AG04449 (cell line): ENCODE measurements at regions of chr17 and their contacts with region 1.

Region 1: DNA sequence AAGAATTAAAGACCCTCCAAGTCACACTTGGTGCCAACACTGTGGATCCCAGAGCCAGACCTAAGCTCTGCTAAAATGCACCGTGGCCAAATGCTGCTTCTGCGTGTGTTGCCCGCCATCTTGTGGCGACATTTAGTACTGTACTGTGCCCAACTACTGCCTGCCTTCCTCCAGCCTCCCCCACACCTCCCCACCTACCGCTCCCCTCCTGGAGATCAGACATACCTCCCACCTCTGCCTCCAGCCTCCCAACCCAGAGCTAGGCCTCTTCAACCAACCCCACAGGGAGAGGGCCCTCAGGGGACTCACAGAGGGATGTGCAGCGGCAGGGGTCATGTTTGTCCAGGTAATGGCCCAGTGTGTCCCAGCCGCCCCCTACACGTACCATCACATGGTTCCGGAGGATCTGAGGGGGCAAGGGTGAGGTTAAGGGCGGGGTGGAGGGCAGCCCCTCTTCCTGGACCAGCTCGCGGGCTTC is 5.5 kb downstream of the GAS2L2 start:
- DNase-seq: peak; percentile 26
- H3K4me3 ChIP-seq: no peak overlapping the region
- CTCF ChIP-seq: peak; percentile 87

Region 2: GRCh38 chr17:35529866-35530265 is 217.7 kb before region 1 on chr17:
- CTCF ChIA-PET with region 1: interaction called, 13 read pairs
- POLR2A ChIA-PET with region 1: no interaction called
- DNase-seq: no peak
- H3K4me3 ChIP-seq: no peak overlapping the region
- CTCF ChIP-seq: no peak

Region 3: DNA sequence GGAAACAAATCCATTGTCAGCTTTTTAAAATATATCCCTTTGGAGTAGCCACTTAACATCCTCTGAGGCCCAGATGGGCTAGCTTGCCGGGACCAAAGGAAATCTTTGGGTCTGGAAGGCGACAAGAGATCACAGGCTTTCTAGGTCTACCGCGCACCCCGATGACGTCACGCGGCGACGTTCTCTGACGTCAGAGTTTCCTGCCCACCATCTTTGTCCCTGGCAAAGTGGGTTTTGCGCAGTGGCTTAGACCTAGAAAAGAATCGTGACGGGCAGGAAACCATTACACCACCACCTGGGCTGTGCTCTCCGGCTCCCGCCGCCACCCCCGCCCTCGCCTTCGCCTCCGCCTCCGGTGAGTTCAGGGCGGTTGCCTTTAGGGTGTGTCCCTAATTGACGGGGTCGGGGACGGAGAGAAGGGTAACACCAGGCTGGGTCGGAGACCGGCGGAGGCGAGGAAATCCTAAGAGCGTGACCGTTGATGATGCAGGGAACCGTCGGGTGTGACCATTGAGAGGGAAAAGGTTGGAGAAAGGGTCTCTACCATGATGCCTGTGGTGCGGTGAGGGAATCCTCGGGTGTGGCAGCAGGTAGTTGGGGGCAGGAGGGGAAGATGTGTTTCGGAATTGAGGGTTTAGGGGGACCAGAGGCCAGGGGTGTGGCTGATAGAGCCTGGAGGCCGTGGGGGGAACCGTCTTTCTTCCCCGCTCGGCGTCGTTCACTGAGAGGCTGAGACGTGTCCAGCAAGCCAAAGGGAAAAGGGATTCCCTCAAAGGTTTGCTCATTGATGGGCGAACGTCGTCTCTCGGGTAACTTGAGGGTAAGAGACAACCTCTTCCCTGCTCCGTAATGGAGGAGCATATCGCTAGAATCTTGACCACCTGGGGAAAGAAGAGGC is 160.3 kb before region 1 on chr17 and contains the start of gene AP2B1:
- CTCF ChIA-PET with region 1: interaction called, 19 read pairs
- POLR2A ChIA-PET with region 1: interaction called, 5 read pairs
- DNase-seq: peak; percentile 77
- H3K4me3 ChIP-seq: peak within 1 kb of the TSS; percentile 96
- CTCF ChIP-seq: no peak

Region 4: GRCh38 chr17:35630530-35631148 is 116.9 kb before region 1 on chr17:
- CTCF ChIA-PET with region 1: interaction called, 64 read pairs
- POLR2A ChIA-PET with region 1: no interaction called
- DNase-seq: no peak
- H3K4me3 ChIP-seq: no peak overlapping the region
- CTCF ChIP-seq: no peak

Region 5: GRCh38 chr17:35666070-35666469 is 81.5 kb before region 1 on chr17:
- CTCF ChIA-PET with region 1: interaction called, 27 read pairs
- POLR2A ChIA-PET with region 1: no interaction called
- DNase-seq: no peak
- H3K4me3 ChIP-seq: no peak overlapping the region
- CTCF ChIP-seq: no peak

Region 6: DNA sequence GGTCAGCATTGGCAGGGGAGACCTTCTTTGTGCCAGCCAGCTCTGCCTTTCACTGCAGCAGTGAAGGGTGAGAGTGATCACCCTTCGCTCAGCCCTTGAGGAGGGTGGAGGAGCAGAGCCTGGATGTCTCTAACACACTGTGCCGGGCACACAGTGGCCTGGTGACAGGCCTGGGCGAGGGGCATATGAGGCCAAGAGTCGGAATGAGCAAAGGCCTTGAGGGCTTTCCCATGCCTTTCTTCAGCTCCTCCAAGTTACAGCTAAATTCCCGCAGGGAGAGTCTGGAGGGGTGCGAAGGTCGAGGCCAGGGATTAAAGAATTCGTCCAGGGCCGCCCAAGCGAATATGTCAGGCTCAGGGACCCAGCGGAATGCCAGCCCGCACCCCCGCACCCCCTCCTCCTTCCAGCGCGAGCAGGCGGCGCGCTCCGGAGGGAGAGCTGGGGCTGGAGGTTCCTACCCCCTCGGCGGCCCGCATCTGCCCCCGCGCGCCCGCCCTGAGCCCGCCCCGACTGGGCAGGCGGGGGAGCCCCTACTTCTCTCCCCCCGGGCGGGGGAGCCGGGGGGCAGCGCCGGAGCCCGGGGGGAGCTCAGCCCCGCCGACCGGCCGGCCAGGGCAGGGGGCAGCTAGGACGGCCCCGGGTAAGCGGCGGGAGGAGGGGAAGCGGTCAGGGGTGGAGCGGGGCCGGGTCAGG is 16.2 kb before region 1 on chr17 and contains the start of gene RASL10B:
- CTCF ChIA-PET with region 1: interaction called, 51 read pairs
- POLR2A ChIA-PET with region 1: interaction called, 3 read pairs
- DNase-seq: no peak
- H3K4me3 ChIP-seq: peak within 1 kb of the TSS; percentile 64
- CTCF ChIP-seq: no peak